ENCODE measurements at regions of chr15 and their contacts with region 1.

Region 1: DNA sequence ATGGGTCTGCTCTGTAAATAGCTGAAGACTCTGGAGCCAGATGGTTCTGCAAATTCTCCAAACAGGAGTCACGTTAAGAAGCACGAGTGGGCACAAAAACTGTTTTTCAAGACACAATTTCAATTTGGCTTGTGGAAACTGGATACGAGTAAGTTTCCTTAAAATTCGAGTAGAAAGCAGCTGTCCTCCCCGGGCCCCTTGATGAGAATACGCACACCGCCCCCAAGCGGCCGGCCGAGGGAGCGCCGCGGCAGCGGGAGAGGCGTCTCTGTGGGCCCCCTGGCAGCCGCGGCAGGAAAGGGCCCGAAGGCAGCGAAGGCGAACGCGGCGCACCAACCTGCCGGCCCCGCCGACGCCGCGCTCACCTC is 778 bp upstream of the THBS1 start:
- DNase-seq: peak; percentile 96
- ATAC-seq: peak; percentile 59
- H3K4me3 ChIP-seq: peak overlapping the region; percentile 87
- H3K27ac ChIP-seq: peak overlapping the region; percentile 93
- H3K4me1 ChIP-seq: peaks cover 45% of the 10 kb centered on the region
- H3K27me3 ChIP-seq: no peaks in the 10 kb centered on the region
- CTCF ChIP-seq: peak; percentile 95

Region 2: DNA sequence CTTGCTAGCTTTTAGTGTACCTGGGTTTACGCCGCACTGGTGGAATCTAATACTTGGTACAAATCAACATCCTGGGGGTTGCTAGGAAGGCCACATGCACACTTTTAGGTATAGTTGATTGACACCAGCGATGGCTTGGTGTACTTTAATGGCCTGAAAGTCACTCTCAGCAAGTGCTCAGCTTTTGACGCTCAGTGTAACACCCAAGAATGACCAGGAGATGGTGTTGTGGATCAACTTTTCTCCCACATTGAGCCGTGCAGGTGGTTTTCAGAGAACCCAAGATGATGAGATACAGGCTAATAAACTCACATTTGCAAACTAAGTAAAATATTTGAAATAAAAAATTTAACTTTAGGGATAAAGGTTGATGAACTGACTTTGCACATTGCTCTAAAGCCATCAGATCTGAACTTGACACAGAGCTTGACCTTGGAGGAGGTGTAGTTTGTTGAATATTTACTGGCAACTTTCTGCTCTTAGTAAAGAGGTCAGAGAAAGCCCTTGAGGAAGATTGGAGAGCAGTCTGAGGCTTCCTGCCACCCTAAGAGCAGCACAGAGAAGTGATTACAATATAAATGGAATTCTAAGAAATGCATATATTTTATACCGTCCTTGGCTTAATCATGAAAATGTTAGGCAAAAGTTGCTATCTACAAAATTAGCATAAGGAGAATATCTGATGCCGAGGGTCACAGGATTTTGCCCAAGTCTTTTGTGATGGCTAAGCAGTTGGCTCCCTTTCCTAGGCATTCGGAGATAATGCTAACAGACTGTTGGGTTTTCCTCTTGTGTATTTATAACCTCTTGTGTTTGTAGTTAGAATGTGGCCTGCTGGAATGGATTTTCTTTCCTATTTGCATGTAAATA is 872.1 kb before region 1 on chr15:
- CTCF ChIA-PET with region 1: no interaction called
- POLR2A ChIA-PET with region 1: no interaction called
- intact Hi-C with region 1: loop called (anchors 1 kb)
- DNase-seq: peak; percentile 77
- ATAC-seq: peak; percentile 97
- H3K4me3 ChIP-seq: no peak overlapping the region
- H3K27ac ChIP-seq: no peak overlapping the region
- H3K4me1 ChIP-seq: no peaks in the 10 kb centered on the region
- H3K27me3 ChIP-seq: no peaks in the 10 kb centered on the region
- CTCF ChIP-seq: peak; percentile 84

Region 3: GRCh38 chr15:39171944-39172368 is 408.1 kb before region 1 on chr15:
- CTCF ChIA-PET with region 1: interaction called, 9 read pairs
- POLR2A ChIA-PET with region 1: no interaction called
- intact Hi-C with region 1: loop called (anchors 1 kb)
- DNase-seq: peak; percentile 98
- ATAC-seq: peak; percentile 99
- H3K4me3 ChIP-seq: no peak overlapping the region
- H3K27ac ChIP-seq: peak overlapping the region; percentile 77
- H3K4me1 ChIP-seq: peaks cover 25% of the 10 kb centered on the region
- H3K27me3 ChIP-seq: no peaks in the 10 kb centered on the region
- CTCF ChIP-seq: peak; percentile 81

Region 4: DNA sequence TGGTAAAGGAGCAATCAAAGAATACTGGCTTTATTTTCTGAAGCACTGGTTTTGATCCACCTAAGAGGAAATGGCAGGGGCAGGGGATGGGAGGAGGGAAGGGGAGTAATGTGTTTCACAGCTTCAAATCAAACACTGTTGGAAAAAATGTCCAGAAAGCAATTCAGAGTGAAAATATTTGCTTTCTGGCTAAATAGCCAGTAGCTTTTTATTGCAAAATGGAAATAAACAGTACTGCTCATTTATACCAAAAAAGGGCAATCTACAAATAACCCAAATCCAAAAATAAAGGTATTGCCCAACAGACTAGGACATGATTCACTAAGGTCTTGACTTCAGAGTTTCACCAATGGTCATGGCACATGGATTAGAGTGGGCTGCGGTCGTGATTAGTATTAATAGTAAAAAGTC is 278.5 kb before region 1 on chr15:
- CTCF ChIA-PET with region 1: no interaction called
- POLR2A ChIA-PET with region 1: no interaction called
- intact Hi-C with region 1: no loop called
- DNase-seq: peak; percentile 53
- ATAC-seq: peak; percentile 21; the same call in 1 of the 2 replicates
- H3K4me3 ChIP-seq: no peak overlapping the region
- H3K27ac ChIP-seq: peak overlapping the region; percentile 46
- H3K4me1 ChIP-seq: peaks cover 30% of the 10 kb centered on the region
- H3K27me3 ChIP-seq: no peaks in the 10 kb centered on the region
- CTCF ChIP-seq: no peak

Region 5: GRCh38 chr15:39404767-39405181 is 175.3 kb before region 1 on chr15:
- CTCF ChIA-PET with region 1: no interaction called
- POLR2A ChIA-PET with region 1: no interaction called
- intact Hi-C with region 1: loop called (anchors 10 kb)
- DNase-seq: peak; percentile 92
- ATAC-seq: peak; percentile 64
- H3K4me3 ChIP-seq: no peak overlapping the region
- H3K27ac ChIP-seq: peak overlapping the region; percentile 67
- H3K4me1 ChIP-seq: peaks cover 30% of the 10 kb centered on the region
- H3K27me3 ChIP-seq: no peaks in the 10 kb centered on the region
- CTCF ChIP-seq: no peak

Region 6: GRCh38 chr15:39512643-39513042 is 67.5 kb before region 1 on chr15:
- CTCF ChIA-PET with region 1: no interaction called
- POLR2A ChIA-PET with region 1: no interaction called
- intact Hi-C with region 1: no loop called
- DNase-seq: no peak
- ATAC-seq: no peak
- H3K4me3 ChIP-seq: no peak overlapping the region
- H3K27ac ChIP-seq: no peak overlapping the region
- H3K4me1 ChIP-seq: peaks cover 13% of the 10 kb centered on the region
- H3K27me3 ChIP-seq: no peaks in the 10 kb centered on the region
- CTCF ChIP-seq: no peak

Region 7: DNA sequence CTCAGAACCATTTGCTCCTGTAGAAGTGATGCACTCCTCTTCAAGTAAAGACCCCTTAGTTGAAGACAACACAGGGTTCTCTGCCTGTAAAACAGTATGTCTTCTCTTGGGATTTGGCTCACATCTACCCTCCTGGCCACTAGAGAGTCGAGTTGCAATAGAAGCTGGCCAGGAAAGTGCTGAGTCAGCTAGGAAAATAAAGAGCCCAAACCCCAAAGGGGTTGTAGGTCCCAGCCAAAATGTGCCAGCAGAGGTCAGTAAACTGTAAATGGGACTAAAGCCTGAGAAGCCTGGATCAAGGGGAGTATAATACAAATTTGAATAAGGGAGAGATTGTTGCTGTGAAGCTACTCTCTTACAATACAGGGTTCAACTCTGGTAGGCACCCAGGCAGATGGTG is 36.5 kb before region 1 on chr15:
- CTCF ChIA-PET with region 1: no interaction called
- POLR2A ChIA-PET with region 1: no interaction called
- intact Hi-C with region 1: no loop called
- DNase-seq: no peak
- ATAC-seq: no peak
- H3K4me3 ChIP-seq: no peak overlapping the region
- H3K27ac ChIP-seq: no peak overlapping the region
- H3K4me1 ChIP-seq: no peaks in the 10 kb centered on the region
- H3K27me3 ChIP-seq: no peaks in the 10 kb centered on the region
- CTCF ChIP-seq: peak; percentile 22; the same call in 1 of the 2 replicates

Region 8: DNA sequence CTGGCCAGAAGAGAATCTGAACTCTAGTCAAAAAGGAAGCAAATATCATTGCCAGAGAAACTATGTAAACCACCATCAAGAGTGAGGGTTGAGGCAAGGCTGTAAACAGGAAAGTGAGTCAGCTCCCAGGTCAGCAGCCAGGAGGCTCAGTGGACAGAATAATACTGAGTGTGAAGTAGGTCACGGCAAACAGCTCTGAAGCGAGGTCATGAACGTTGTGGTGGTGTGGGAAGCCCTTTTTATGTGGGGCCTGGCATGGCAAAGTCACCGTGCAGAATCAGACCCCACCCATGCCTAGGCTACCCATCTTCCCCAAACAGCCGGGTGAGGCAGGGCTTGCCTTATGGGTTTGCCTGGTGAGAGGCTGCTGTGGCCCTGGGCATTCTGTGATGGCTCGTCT is 44.7 kb after region 1 on chr15:
- CTCF ChIA-PET with region 1: interaction called, 3 read pairs
- POLR2A ChIA-PET with region 1: no interaction called
- intact Hi-C with region 1: loop called (anchors 5 kb)
- DNase-seq: peak; percentile 88
- ATAC-seq: peak; percentile 84
- H3K4me3 ChIP-seq: no peak overlapping the region
- H3K27ac ChIP-seq: peak overlapping the region; percentile 60
- H3K4me1 ChIP-seq: peaks cover 54% of the 10 kb centered on the region
- H3K27me3 ChIP-seq: no peaks in the 10 kb centered on the region
- CTCF ChIP-seq: no peak

Region 9: DNA sequence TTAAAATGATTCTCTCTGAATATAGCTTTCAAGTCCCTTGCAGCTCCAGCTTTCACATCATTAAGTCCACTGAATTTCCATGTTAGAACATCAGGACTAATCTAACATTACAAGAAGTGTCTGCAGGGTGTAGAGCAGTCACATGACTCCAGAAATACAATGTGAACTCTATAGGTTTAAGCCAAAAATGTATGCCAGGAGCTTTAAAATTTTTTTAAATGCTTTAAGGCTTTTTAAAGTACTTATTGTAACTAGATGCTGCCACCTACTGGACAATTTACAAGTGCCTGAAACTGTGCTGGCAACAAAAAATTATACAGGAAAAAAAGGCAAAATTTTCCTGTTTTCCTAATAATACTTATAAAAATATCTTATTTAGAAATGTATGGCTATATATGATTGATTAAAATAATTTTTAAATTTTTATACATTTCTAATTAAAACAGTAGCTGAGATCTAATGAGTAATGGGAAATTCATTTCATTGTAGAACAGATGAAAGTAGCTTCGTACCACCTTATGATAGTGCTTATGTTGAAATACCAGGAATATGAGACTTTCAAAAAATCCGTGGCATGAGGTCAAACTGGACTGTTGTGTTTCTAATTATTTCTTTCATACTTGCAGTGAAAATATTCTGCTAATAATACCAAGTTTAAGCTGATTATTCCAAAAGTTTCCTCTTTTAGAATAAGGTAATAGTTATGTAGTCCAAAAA is 176.9 kb after region 1 on chr15:
- CTCF ChIA-PET with region 1: interaction called, 9 read pairs
- POLR2A ChIA-PET with region 1: no interaction called
- intact Hi-C with region 1: loop called (anchors 2 kb)
- DNase-seq: peak; percentile 79
- ATAC-seq: peak; percentile 46; the same call in 1 of the 2 replicates
- H3K4me3 ChIP-seq: no peak overlapping the region
- H3K27ac ChIP-seq: no peak overlapping the region
- H3K4me1 ChIP-seq: no peaks in the 10 kb centered on the region
- H3K27me3 ChIP-seq: no peaks in the 10 kb centered on the region
- CTCF ChIP-seq: peak; percentile 78

Region 10: GRCh38 chr15:39767921-39768320 is 187.8 kb after region 1 on chr15:
- CTCF ChIA-PET with region 1: no interaction called
- POLR2A ChIA-PET with region 1: no interaction called
- intact Hi-C with region 1: no loop called
- DNase-seq: no peak
- ATAC-seq: no peak
- H3K4me3 ChIP-seq: no peak overlapping the region
- H3K27ac ChIP-seq: no peak overlapping the region
- H3K4me1 ChIP-seq: no peaks in the 10 kb centered on the region
- H3K27me3 ChIP-seq: no peaks in the 10 kb centered on the region
- CTCF ChIP-seq: no peak

Measured in PC-3 (cell line).